Endothelial cell of umbilical vein (primary cell): ENCODE measurements at regions of chr10 and their contacts with region 1.

Region 1: DNA sequence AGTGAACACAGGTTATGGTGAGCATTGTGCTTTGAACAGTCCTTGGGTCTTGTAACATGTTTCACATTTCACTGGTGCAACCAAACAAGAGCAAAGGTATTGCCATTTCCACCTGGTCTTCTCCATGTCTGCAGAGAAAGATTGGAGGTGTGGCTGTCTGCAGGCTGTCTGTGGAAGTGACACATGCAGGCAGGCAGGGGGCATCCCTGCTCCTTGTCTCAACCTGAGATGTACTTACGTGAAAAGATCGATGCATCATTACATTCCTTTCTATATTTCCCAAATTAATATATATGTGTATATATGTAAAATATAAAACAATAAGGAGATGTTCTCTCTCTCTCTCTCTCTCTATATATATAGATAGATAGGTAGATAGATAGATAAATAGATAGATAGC is 54.3 kb downstream of the LRRC18 start:
- DNase-seq: peak; percentile 43
- H3K4me3 ChIP-seq: no peak overlapping the region
- H3K27ac ChIP-seq: no peak overlapping the region
- H3K4me1 ChIP-seq: no peaks in the 10 kb centered on the region
- H3K27me3 ChIP-seq: no peaks in the 10 kb centered on the region
- CTCF ChIP-seq: peak; percentile 29 to 55
- POLR2A ChIP-seq: no peak

Region 2: GRCh38 chr10:48872234-48872633 is 13.1 kb before region 1 on chr10:
- CTCF ChIA-PET with region 1: no interaction called
- POLR2A ChIA-PET with region 1: no interaction called
- dilution Hi-C with region 1: no loop called
- intact Hi-C with region 1: no loop called
- DNase-seq: no peak
- H3K4me3 ChIP-seq: no peak overlapping the region
- H3K27ac ChIP-seq: no peak overlapping the region
- H3K4me1 ChIP-seq: no peaks in the 10 kb centered on the region
- H3K27me3 ChIP-seq: peaks cover 2 to 3% of the 10 kb centered on the region in 2 experiments
- CTCF ChIP-seq: no peak
- POLR2A ChIP-seq: no peak

Region 3: GRCh38 chr10:49164559-49165188 is 279.3 kb after region 1 on chr10:
- CTCF ChIA-PET with region 1: interaction called, 40 read pairs
- POLR2A ChIA-PET with region 1: no interaction called
- dilution Hi-C with region 1: no loop called
- intact Hi-C with region 1: loop called (anchors 1 kb)
- DNase-seq: peak; percentile 56
- H3K4me3 ChIP-seq: no peak overlapping the region
- H3K27ac ChIP-seq: no peak overlapping the region
- H3K4me1 ChIP-seq: no peaks in the 10 kb centered on the region
- H3K27me3 ChIP-seq: no peaks in the 10 kb centered on the region
- CTCF ChIP-seq: peak; percentile 52 to 81
- POLR2A ChIP-seq: no peak

Region 4: DNA sequence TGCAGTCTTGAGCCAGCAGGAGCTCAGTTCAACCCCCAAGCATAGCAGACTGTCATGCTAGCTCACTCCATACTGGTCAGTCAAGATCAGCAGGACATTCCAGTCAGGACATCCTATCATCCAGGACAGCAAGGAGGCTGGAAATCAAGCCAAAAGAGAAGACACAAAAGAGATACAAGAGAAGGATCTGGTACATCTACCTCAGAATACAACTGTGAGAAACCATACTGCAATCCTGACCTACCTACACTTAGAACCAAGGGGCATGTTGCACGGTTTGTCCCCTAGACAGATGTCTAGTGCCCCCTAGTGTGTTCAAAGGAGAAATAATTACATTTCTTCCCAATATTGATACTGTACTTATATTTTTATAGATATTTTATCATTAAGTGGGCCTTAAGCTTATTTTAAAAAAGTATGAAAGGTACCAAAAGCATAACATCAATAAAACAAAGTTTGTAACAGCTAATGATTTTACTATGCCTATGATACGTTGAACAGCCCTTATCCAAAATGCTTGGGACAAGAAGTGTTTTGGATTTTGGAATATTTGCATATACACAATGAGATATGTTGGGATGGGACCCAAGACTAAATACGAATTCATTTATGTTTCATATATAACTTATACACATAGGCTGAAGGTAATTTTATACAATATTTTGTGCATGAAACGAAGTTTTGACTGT is 626.9 kb after region 1 on chr10:
- CTCF ChIA-PET with region 1: interaction called, 3 read pairs
- POLR2A ChIA-PET with region 1: no interaction called
- dilution Hi-C with region 1: no loop called
- intact Hi-C with region 1: loop called (anchors 5 kb)
- DNase-seq: peak; percentile 26
- H3K4me3 ChIP-seq: no peak overlapping the region
- H3K27ac ChIP-seq: no peak overlapping the region
- H3K4me1 ChIP-seq: peaks cover 2% of the 10 kb centered on the region
- H3K27me3 ChIP-seq: no peaks in the 10 kb centered on the region
- CTCF ChIP-seq: peak; percentile 40 to 49
- POLR2A ChIP-seq: no peak